ENCODE measurements at regions of chr7 and their contacts with region 1.

Region 1: DNA sequence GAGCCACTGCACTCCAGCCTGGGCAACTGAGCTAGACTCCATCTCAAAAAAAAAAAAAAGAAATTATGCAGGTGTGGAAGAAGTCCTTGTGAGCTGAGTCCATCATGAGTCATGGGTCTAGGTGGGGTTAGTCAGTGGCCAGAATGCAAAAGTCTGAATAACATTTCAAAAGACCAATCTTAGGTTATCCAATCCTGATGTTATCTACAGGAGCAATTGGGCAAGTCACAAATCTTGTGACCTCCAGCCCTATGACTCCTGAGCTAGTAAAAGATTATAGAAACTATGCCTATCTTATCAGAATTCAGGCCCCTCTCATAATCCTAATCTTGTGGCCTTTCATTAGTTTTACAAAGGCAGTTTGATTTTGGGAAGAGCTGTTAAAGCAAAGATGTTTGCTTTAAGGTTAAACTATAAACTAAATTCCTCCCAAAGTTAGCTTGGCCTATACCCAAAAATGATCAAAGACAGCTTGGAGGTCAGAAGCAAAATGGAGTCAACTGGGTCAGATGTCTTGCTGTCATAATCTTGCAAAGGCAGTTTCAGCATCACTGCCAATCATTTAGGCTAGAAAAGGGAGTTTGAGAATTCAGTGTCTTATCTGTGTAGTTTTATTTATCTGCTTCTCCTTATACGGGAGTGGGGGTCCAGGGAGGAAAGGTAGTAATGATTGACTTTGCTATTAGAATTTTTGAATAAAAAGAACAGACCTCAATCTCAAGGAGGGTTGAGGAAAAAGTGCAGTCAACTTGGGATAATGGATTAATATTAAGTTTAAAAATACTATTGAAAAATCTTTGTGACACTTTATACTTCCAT is 71.2 kb upstream of the TRIM24 start:
- DNase-seq: peak; percentile 36
- H3K4me3 Mint-ChIP-seq: no peak overlapping the region
- H3K27ac Mint-ChIP-seq: peak overlapping the region; percentile 62
- H3K4me1 Mint-ChIP-seq: peaks cover 23% of the 10 kb centered on the region
- H3K27me3 Mint-ChIP-seq: no peaks in the 10 kb centered on the region
- CTCF ChIP-seq: no peak

Region 2: DNA sequence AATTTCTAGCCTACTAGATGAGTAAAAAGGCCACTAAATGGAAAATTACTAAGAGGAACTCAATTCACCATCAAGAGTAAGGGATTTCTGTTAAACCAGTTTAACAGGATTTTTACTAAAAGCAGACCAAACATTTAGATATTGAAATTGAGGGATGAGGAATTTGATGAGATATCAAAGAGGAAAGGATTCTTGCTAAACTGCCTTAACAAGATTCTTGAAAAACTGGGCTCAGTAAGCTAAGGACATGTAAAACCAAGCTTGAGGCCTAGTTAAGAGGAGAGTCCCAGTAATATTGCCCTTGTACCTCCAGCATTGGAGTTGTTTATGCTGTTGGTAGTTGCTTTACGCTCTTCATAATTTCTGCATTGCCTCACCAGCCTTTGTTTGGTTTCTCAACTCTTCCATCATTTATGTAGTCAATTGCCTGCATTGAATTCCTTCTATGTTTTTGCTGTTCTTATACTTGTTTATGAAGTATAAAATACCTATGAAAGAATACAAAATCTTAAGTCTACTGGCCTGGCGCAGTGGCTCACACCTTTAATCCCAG is 84.9 kb before region 1 on chr7:
- CTCF ChIA-PET with region 1: no interaction called
- intact Hi-C with region 1: loop called (anchors 5 kb)
- DNase-seq: no peak
- H3K4me3 Mint-ChIP-seq: no peak overlapping the region
- H3K27ac Mint-ChIP-seq: peak overlapping the region; percentile 82
- H3K4me1 Mint-ChIP-seq: peaks cover 21% of the 10 kb centered on the region
- H3K27me3 Mint-ChIP-seq: no peaks in the 10 kb centered on the region
- CTCF ChIP-seq: no peak